A549 (cell line): ENCODE measurements at regions of chr19 and their contacts with region 1.

Region 1: GRCh38 chr19:47143322-47144073 is 12.9 kb downstream of the SAE1 start:
- DNase-seq: no peak
- ATAC-seq: no peak
- H3K4me3 ChIP-seq: no peak overlapping the region
- H3K27ac ChIP-seq: peak overlapping the region in 1 of 2 experiments; percentile 29; a peak in 3 of 6 replicates
- H3K4me1 ChIP-seq: peaks cover 34% of the 10 kb centered on the region
- CTCF ChIP-seq: no peak
- EP300 ChIP-seq: no peak
- POLR2A ChIP-seq: no peak
- RAD21 ChIP-seq: no peak

Region 2: DNA sequence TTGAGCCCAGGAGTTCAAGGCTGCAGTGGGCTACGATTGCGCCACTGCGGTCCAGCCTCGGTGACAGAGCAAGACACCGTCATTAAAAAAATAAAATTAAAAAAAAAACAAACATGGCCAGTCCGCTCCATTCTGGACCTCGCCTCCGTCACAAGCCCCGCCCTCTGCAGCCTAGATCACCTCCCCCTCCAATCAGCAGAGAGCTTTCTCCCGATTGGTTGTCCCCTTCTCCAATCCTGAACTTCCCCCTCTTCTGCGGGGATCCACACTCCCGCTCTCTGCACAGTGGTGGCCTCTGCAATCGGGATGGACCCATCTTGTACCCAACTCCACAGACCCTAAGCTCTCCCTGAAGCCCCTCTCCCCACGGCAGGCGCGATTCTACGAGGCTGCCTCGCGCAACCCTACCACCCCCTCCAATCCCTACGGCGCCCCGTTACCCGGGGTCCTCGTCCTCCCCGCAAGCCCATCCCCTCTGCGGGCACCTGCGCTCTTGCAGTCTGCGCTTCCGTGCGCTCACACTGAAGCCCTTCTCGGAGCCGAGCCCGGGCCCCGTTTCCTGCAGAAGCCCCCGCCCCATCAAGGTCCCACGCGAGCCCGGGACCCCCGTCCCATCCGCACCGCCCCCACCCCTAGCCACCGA is 95.6 kb before region 1 on chr19:
- CTCF ChIA-PET with region 1: no interaction called
- POLR2A ChIA-PET with region 1: no interaction called
- DNase-seq: peak; percentile 94 to 100
- ATAC-seq: peak; percentile 86 to 88
- H3K4me3 ChIP-seq: peak overlapping the region; percentile 80
- H3K27ac ChIP-seq: peak overlapping the region; percentile 78 to 91
- H3K4me1 ChIP-seq: 0 out of 3 replicates have a peak, but pooled peaks cover 4% of the 10 kb centered on the region
- CTCF ChIP-seq: no peak
- EP300 ChIP-seq: no peak
- POLR2A ChIP-seq: peak; percentile 68
- RAD21 ChIP-seq: no peak

Region 3: DNA sequence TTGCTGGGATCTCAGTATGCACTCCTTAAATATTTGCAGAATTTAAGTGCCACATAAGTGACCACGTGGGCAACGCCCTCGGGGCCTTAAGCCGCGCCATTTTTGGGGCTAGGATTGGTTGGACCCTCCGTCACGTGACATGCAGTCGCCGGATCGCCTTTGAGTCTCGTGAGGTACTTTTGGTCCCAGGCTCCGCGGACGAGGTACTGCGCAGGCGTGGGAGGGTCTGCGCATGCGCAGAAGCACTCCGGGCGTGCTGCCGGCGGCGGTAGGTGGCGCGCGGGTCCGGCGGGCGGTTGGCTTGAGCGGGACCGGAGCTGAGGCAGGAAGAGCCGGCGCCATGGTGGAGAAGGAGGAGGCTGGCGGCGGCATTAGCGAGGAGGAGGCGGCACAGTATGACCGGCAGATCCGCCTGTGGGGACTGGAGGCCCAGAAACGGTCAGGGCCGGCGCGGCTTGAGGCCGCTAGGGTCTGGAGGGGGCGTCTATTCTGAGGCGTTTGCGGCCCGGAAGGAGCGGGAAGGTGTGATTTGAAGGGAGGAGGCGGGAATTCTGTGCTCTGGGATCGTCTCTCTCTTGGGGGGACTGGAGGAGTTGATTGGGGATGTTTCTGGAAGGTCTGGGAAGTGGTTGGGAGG is 12.8 kb before region 1 on chr19 and contains the start of gene SAE1:
- CTCF ChIA-PET with region 1: interaction called, 63 read pairs
- POLR2A ChIA-PET with region 1: interaction called, 3 read pairs
- DNase-seq: peak; percentile 100
- ATAC-seq: peak; percentile 91 to 92
- H3K4me3 ChIP-seq: peak within 1 kb of the TSS; percentile 71
- H3K27ac ChIP-seq: peak within 1 kb of the TSS; percentile 92 to 93
- H3K4me1 ChIP-seq: peaks cover 35% of the 10 kb centered on the region
- CTCF ChIP-seq: peak; percentile 50
- EP300 ChIP-seq: no peak
- POLR2A ChIP-seq: peak; percentile 90
- RAD21 ChIP-seq: peak in 1 of 2 experiments; percentile 53; a peak in 2 of 5 replicates
- polyA plus RNA-seq, gene SAE1: 229 and 249 TPM in 2 replicates

Region 4: GRCh38 chr19:47157431-47158321 is 14.2 kb after region 1 on chr19:
- CTCF ChIA-PET with region 1: interaction called, 47 read pairs
- POLR2A ChIA-PET with region 1: interaction called, 3 read pairs
- DNase-seq: no peak
- ATAC-seq: peak; percentile 42 to 54; a peak in 4 of 6 replicates
- H3K4me3 ChIP-seq: no peak overlapping the region
- H3K27ac ChIP-seq: peak overlapping the region in 1 of 2 experiments; percentile 63; a peak in 3 of 6 replicates
- H3K4me1 ChIP-seq: peaks cover 29% of the 10 kb centered on the region
- CTCF ChIP-seq: no peak
- EP300 ChIP-seq: no peak
- POLR2A ChIP-seq: no peak
- RAD21 ChIP-seq: no peak

Region 5: DNA sequence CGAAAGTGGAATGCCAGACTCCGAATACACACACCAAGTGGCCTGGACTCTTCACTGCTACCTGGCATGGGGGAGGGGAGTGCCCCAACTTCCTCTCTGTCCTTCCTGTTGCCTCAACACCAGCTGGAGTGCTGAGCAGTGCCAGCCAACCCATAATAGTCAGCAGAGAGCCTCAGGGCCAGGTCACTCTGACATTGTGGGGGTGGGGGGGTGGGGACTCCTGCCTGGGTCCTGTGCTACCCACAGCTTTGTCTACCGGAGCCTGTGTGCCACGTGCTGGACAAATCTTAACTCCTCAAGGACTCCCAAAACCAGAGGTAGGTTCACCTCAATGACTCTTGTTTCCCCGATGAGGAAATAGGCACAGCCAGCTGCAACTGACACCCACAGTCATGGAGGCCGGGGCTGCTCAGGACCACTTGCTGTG is 193.4 kb after region 1 on chr19:
- CTCF ChIA-PET with region 1: no interaction called
- POLR2A ChIA-PET with region 1: no interaction called
- DNase-seq: peak in 1 of 2 experiments; percentile 32
- ATAC-seq: peak; percentile 13 to 36; a peak in 3 of 6 replicates
- H3K4me3 ChIP-seq: no peak overlapping the region
- H3K27ac ChIP-seq: peak overlapping the region in 1 of 2 experiments; percentile 54; a peak in 3 of 6 replicates
- H3K4me1 ChIP-seq: peaks cover 24% of the 10 kb centered on the region
- CTCF ChIP-seq: no peak
- EP300 ChIP-seq: no peak
- POLR2A ChIP-seq: no peak
- RAD21 ChIP-seq: no peak